GM10248 (cell line): ENCODE measurements at regions of chr13 and their contacts with region 1.

Region 1: DNA sequence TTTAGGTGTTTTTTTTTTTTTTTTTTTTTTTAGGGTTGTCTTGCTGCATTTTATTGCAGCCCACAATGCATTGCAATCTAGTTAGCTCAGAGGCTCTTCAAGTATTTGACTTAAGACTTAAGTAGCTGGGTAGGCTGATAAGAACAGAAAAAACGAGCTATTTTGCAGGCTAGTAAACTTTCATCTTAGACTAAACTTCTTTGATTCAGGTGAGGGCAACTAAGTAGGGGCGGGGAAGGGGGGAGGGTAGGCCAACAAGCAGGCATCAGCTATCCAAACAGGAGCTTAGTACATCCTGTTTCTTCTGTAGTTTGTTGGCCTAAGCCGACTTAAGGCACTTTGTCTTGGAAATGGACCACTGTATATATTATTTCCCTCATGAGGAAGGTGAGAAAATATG is 4.9 kb upstream of the TDRD3 start:
- DNase-seq: no peak
- CTCF ChIP-seq: no peak

Region 2: GRCh38 chr13:60379837-60380236 is 12.3 kb before region 1 on chr13:
- CTCF ChIA-PET with region 1: interaction called, 21 read pairs
- POLR2A ChIA-PET with region 1: no interaction called
- DNase-seq: no peak
- CTCF ChIP-seq: no peak